ENCODE measurements at regions of chr15 and their contacts with region 1.

Region 1: GRCh38 chr15:89139400-89140166 is 51.3 kb downstream of the ABHD2 start:
- DNase-seq: peak in 39 of 42 donors; percentile 32 to 85 (median 59)

Region 2: GRCh38 chr15:88954431-88955277 is 184.9 kb before region 1 on chr15:
- intact Hi-C with region 1: no loop called
- DNase-seq: peak; percentile 6 to 85 (median 52)

Region 3: GRCh38 chr15:89087830-89088604 is 51.6 kb before region 1 on chr15 and contains the start of gene ABHD2:
- intact Hi-C with region 1: loop called (anchors 10 kb)
- DNase-seq: peak; percentile 96 to 100 (median 99)

Region 4: DNA sequence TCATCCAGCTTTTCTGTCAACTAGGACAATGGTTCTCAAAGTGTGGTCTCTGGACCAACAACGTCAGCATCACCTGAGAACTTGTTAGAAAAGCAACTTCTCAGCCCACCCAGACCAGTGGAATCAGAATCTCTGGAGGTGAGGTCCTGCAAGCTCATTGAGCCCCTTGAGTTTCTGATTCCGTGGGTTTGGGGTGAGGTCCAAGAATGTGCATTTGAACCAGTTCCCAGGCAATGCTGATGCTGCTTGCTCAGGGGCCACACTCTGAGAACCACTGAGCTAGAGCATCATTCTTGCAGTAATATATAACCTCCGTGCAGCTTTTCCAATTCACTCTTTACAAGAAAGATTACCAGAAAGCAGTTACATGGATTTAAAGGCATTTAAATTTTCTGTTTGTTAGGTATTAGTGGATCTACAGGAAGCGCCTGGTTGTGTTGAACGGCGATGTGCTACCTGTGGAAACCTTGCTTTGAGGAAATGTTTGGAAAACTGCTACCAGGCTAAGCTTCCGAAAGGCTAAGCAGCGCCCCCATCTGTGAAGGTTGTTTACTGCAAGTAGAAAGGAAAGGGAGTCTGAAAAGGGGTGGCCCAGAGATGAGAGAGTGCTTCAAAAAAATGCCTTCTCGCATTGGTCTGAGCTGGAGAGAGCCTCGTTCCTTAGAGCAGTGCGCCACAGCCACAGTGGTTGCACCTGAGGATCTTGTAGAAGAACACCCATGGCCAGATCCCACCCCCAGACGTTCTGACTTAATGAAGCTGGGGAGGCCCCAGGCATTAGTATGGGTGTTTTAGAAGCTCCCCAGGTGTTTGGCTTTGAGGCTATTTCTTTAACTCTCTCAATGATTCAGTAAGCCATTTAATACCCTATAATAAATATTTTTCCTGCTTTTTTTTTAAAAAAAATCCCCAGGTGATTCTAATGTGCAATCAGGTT is 31.8 kb after region 1 on chr15:
- intact Hi-C with region 1: loop called (anchors 5 kb)
- DNase-seq: peak in 40 of 42 donors; percentile 21 to 89 (median 68)